CD8-positive, alpha-beta T cell (primary cell): ENCODE measurements at regions of chr3 and their contacts with region 1.

Region 1: GRCh38 chr3:55292360-55292759 is 194.7 kb downstream of the WNT5A start:
- DNase-seq: no peak
- ATAC-seq: no peak
- H3K4me3 ChIP-seq: no peak overlapping the region
- H3K4me3 Mint-ChIP-seq: no peak overlapping the region
- H3K27ac ChIP-seq: no peak overlapping the region
- H3K27ac Mint-ChIP-seq: no peak overlapping the region
- H3K4me1 ChIP-seq: no peaks in the 10 kb centered on the region
- H3K4me1 Mint-ChIP-seq: no peaks in the 10 kb centered on the region
- H3K27me3 ChIP-seq: no peaks in the 10 kb centered on the region
- H3K27me3 Mint-ChIP-seq: no peaks in the 10 kb centered on the region
- CTCF ChIP-seq: no peak

Region 2: DNA sequence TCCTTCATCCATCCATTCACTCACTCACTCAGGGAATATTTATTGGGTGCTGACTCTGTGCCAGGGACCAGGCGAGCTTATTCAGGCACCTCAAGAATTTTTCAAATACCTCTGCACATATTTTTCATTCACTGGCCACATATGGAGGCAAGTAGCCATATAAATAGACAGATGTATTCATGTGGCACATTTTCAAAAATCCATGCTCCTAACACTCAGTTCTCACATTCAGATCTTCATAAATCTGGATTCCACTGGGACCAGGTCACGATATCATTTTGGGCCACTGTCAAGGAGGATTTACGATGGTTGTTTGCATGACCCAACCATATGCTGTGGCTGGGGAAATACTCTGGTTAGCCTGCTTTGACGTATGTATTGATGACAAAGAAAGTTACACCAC is 122.8 kb before region 1 on chr3:
- CTCF ChIA-PET with region 1: no interaction called
- POLR2A ChIA-PET with region 1: no interaction called
- intact Hi-C with region 1: no loop called
- DNase-seq: no peak
- ATAC-seq: no peak
- H3K4me3 ChIP-seq: no peak overlapping the region
- H3K4me3 Mint-ChIP-seq: no peak overlapping the region
- H3K27ac ChIP-seq: no peak overlapping the region
- H3K27ac Mint-ChIP-seq: no peak overlapping the region
- H3K4me1 ChIP-seq: no peaks in the 10 kb centered on the region
- H3K4me1 Mint-ChIP-seq: no peaks in the 10 kb centered on the region
- H3K27me3 ChIP-seq: no peaks in the 10 kb centered on the region
- H3K27me3 Mint-ChIP-seq: no peaks in the 10 kb centered on the region
- CTCF ChIP-seq: no peak

Region 3: DNA sequence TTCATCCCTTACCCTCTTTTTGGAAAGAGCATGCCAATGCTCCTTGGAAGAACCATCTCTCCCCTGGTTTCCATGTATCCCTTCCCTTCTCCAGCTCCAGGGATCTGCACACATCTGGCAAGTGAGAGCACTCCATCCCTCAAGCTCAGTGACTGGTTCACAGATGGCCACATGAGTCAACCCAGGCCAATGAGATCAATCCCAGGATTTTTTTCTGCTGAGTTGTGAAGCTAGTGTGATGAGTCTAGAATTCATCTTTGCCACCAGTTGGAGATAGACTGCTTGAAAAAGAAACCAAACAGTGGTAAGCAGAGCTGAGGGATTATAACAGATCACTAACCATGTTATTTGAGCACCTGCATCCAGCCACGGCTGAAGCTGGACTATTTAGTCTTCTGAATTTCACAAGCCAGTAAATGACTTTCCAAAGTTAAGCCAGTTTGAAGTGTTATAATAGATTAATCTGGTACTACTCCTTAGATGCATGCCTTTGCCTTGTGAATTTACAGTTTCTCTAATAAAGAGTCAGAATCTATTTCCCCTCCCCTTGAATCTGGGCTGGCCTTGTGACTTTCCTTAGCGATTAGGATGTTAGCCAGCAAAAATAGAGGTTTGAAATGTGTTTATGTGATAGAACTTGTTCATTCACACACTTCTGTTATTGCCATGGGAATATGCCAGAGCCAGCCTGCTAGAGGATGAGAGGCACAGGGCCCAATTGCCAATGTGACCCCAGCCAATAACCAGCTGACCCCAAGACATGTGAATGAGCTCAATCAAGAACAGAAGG is 35.0 kb after region 1 on chr3:
- CTCF ChIA-PET with region 1: no interaction called
- POLR2A ChIA-PET with region 1: no interaction called
- intact Hi-C with region 1: loop called in 1 of 2 experiments (anchors 1 kb)
- DNase-seq: no peak
- ATAC-seq: no peak
- H3K4me3 ChIP-seq: no peak overlapping the region
- H3K4me3 Mint-ChIP-seq: no peak overlapping the region
- H3K27ac ChIP-seq: no peak overlapping the region
- H3K27ac Mint-ChIP-seq: no peak overlapping the region
- H3K4me1 ChIP-seq: no peaks in the 10 kb centered on the region
- H3K4me1 Mint-ChIP-seq: no peaks in the 10 kb centered on the region
- H3K27me3 ChIP-seq: no peaks in the 10 kb centered on the region
- H3K27me3 Mint-ChIP-seq: no peaks in the 10 kb centered on the region
- CTCF ChIP-seq: no peak